Prostate gland (tissue), 2 donors: ENCODE measurements at regions of chr15 and their contacts with region 1.

Region 1: DNA sequence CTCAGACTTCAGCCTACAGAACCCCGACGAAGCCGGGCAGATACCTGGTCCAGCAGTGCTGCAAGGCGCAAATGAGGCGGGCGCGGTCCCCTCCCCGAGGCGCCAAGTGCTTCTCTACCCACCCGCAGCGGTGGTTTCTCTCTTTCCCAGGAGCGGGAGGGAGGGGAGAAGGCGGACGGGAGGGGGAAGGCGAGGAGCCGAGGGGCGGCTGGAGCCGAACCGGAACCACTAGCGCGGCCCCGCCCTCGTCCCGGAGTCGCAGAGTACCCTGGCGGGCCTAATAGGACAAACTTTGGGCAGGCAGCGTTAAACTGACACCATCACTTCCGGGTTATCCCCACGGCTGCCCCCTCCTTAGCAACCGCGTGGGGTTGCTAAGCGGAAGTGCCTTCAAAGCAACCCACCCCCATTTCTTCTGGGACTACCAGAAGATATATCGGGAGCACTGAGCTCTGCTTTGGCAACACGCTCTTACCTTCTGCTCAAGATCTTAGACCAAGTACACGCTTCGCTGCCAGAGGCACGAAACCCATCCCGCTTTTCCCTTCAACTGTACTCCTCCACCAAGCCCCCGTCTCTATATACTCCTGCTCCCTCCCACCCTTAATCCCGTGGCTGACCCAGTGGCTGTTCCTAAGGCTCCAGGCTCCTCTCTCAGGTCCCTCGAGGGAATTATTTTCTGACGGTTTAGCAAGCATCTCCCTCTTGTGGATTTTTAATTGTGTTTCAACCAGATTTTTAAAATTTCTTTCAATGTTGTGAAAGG is at the start of gene CSNK1G1:
- DNase-seq: peak; percentile 92
- H3K4me3 ChIP-seq: peak within 1 kb of the TSS; percentile 73 to 80
- H3K27ac ChIP-seq: peak within 1 kb of the TSS; percentile 69 to 75
- H3K4me1 ChIP-seq: no peaks in the 10 kb centered on the region
- H3K27me3 ChIP-seq: no peaks in the 10 kb centered on the region
- CTCF ChIP-seq: peak in 3 of 4 experiments; percentile 39 to 60 (median 56)
- POLR2A ChIP-seq: peak; percentile 41
- total RNA-seq, gene CSNK1G1: 9.2 to 20.6 TPM

Region 2: DNA sequence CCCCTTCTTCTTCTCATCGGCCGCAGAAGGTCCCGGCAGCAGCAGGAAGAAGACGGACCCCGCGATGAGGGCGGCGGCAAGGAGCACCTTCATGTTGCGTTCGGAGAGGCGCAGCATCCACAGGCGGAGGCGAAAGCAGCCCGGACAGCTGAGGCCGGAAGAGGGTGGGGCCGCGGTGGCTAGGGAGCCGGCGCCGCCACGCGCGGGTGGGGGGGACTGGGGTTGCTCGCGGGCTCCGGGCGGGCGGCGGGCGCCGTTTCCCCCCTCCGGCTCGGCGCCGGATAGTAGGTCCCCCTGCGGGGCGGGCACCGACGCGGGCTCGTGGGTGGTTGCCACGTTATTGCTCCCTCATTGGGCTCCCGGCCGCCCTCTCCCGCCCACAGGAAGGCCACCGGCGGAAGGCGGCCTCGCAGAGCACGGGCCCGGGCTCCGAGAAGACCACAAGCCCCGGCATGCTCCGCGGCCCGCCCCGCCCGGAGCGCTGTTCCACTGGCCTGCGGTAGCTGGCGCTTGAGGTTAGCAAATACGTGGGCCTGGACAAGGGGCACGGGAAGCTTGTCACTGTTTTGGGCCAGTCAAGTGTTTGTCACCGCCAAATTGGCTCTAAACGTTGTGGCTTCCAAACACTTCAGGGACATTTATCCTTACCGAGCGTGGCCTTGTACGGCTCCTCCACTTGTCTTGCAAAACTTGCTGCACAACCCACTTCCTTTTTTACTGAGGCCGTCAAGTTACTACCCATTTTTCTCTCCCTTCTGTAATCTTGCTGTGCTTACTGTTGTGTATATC is 193.1 kb before region 1 on chr15 and contains the start of gene PPIB:
- intact Hi-C with region 1: loop called (anchors 1 kb)
- DNase-seq: peak; percentile 97
- H3K4me3 ChIP-seq: peak within 1 kb of the TSS; percentile 78 to 80
- H3K27ac ChIP-seq: peak within 1 kb of the TSS; percentile 79 to 85
- H3K4me1 ChIP-seq: peaks cover 15% of the 10 kb centered on the region
- H3K27me3 ChIP-seq: no peaks in the 10 kb centered on the region
- CTCF ChIP-seq: peak in 3 of 4 experiments; percentile 27 to 66 (median 61)
- POLR2A ChIP-seq: peak; percentile 61
- total RNA-seq, gene PPIB: 372 to 624 TPM

Region 3: DNA sequence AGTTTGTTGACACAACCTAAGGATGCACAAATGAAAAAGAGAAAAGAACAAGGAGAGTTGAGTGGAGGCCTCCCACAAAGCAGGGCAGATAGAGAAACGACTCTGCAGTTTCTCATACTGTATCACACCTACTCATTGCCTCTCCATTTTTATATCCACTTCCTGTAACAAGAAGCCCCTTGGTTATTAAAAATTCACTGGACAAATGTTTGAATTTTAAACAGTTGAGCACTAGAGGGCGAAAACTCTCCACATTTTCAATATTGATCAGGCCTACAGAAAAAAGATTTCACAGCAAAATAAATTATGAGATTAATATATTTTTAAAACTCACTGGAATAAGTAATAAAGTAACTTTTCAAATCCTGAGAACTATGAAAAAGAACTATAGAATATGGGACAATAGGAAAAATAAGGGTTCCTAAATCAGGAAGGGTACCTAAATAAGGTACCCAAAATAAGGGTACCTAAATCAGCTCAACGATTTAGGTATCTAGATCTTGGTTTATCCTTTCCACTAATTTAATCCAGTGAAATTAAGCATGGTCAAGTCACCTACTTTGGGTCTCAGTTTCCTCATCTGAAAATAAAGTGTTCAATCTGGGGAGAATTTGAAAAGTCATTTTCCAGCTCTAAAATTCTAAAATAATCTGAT is 146.3 kb before region 1 on chr15:
- intact Hi-C with region 1: loop called (anchors 5 kb)
- DNase-seq: no peak
- H3K4me3 ChIP-seq: no peak overlapping the region
- H3K27ac ChIP-seq: no peak overlapping the region
- H3K4me1 ChIP-seq: no peaks in the 10 kb centered on the region
- H3K27me3 ChIP-seq: no peaks in the 10 kb centered on the region
- CTCF ChIP-seq: peak in 3 of 4 experiments; percentile 32 to 57 (median 55)
- POLR2A ChIP-seq: no peak

Region 4: GRCh38 chr15:64422697-64423096 is 66.6 kb after region 1 on chr15:
- intact Hi-C with region 1: no loop called
- DNase-seq: no peak
- H3K4me3 ChIP-seq: no peak overlapping the region
- H3K27ac ChIP-seq: no peak overlapping the region
- H3K4me1 ChIP-seq: no peaks in the 10 kb centered on the region
- H3K27me3 ChIP-seq: no peaks in the 10 kb centered on the region
- CTCF ChIP-seq: no peak
- POLR2A ChIP-seq: no peak